ENCODE measurements at regions of chr9 and their contacts with region 1.

Region 1: GRCh38 chr9:95510709-95511615 is 5.8 kb downstream of the PTCH1 start:
- DNase-seq: peak; percentile 97
- ATAC-seq: peak; percentile 77
- H3K4me3 ChIP-seq: peak overlapping the region; percentile 84
- H3K27ac ChIP-seq: peak overlapping the region; percentile 99
- H3K4me1 ChIP-seq: peaks cover 4% of the 10 kb centered on the region
- H3K27me3 ChIP-seq: no peaks in the 10 kb centered on the region; the same call in 1 of the 2 replicates
- CTCF ChIP-seq: no peak
- POLR2A ChIP-seq: peak; percentile 28; the same call in 1 of the 2 replicates
- RAD21 ChIP-seq: no peak

Region 2: DNA sequence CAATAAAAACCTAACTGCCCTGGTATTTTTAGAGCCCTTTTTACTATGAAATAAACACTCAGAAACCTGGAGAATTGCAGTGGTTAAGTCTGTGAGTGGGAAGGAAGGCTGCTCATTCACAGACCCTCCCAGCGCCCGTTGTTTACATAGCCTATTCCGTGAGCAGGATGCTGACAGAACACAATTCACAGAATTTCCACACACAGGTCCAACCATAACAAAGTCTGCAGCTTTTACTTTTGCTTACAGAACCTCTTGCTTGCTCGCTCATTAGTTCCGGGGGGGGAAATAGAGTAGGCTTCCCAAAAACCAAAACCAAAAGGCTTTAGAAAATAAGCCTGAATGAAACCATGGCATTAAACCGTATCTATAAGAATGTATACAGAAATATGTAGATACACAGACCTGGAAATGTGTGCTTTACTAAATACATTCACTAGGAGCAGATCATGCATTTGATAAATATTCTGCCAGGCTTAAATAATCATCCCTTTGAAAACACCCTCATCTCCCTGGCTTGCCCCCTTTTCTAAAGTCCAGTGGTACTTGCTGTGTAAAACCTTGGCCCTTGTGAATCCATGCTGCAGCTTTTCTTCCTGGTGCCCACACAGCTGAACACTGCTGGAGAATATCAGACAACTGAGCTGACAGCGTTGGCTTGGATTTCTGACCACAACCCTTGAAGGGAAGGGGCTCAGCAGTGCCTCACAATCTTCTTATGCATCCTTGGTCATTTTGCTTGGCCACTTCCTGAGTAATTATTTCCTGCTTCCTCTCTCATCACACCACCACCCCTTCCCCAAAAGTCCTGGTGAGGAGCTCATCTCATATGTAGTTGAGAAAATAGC is 321.5 kb before region 1 on chr9:
- CTCF ChIA-PET with region 1: no interaction called
- POLR2A ChIA-PET with region 1: no interaction called
- dilution Hi-C with region 1: no loop called
- in situ Hi-C with region 1: no loop called
- intact Hi-C with region 1: loop called (anchors 5 kb)
- DNase-seq: peak; percentile 91
- ATAC-seq: peak; percentile 96
- H3K4me3 ChIP-seq: peak overlapping the region; percentile 1; the same call in 1 of the 2 replicates
- H3K27ac ChIP-seq: peak overlapping the region; percentile 51; the same call in 1 of the 2 replicates
- H3K4me1 ChIP-seq: peaks cover 12% of the 10 kb centered on the region
- H3K27me3 ChIP-seq: no peaks in the 10 kb centered on the region
- CTCF ChIP-seq: no peak
- POLR2A ChIP-seq: no peak
- RAD21 ChIP-seq: no peak

Region 3: GRCh38 chr9:95317119-95317892 is 193.7 kb before region 1 on chr9 and contains the start of gene FANCC:
- CTCF ChIA-PET with region 1: no interaction called
- POLR2A ChIA-PET with region 1: interaction called, 8 read pairs
- dilution Hi-C with region 1: no loop called
- in situ Hi-C with region 1: loop called (anchors 10 kb)
- intact Hi-C with region 1: loop called (anchors 2 kb)
- DNase-seq: peak; percentile 86
- ATAC-seq: peak; percentile 92
- H3K4me3 ChIP-seq: peak within 1 kb of the TSS; percentile 99
- H3K27ac ChIP-seq: peak within 1 kb of the TSS; percentile 100
- H3K4me1 ChIP-seq: peaks cover 2% of the 10 kb centered on the region; the same call in 1 of the 2 replicates
- H3K27me3 ChIP-seq: no peaks in the 10 kb centered on the region
- CTCF ChIP-seq: no peak
- POLR2A ChIP-seq: peak; percentile 86
- RAD21 ChIP-seq: no peak
- total RNA-seq, gene FANCC: 6.3 and 6.4 TPM in 2 replicates

Region 4: DNA sequence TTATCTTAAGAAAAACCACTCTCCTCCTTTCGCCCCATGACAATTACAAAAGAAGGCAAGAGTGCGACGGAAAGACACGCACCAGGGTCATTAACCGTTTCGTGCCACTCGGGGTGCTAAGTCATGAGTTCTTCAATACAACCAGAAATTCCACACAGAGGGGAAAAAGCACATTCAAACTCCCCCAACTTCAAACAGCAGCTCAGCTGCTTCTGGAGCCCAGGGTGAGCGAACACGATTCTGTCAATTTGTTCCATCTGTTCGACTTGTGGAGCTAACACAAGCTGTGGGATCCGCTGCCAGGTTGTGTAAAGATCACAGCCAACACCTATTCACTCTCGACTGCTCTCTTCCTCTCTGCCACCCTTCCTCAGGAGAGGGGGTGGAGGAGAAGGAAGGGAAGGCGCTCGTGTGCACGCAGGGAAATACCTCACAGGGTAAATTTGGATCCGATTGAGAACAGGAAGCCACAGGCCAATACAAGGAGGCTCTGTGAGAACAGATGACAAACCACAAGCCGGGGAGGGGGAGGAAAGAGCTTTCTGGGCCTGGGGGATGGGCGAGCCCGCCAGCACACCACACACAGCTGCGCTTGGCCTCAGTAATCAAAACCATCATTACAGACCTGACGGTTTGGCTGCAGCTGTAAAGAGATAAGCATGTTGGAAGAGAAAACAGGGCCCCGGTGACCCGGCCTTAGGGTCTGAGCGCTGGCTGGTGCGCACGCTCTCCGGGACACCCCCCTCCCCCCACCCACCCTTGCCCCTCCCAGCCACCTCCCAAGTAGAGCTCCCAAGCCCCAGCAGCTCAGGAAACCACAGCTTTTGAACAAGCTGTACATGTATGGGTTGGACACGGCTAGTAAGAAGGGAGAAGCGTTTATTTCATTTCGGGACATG is 48.5 kb before region 1 on chr9:
- CTCF ChIA-PET with region 1: no interaction called
- POLR2A ChIA-PET with region 1: no interaction called
- dilution Hi-C with region 1: no loop called
- in situ Hi-C with region 1: no loop called
- intact Hi-C with region 1: loop called (anchors 2 kb)
- DNase-seq: peak; percentile 94
- ATAC-seq: peak; percentile 84
- H3K4me3 ChIP-seq: peak overlapping the region; percentile 5; the same call in 1 of the 2 replicates
- H3K27ac ChIP-seq: peak overlapping the region; percentile 89
- H3K4me1 ChIP-seq: peaks cover 44% of the 10 kb centered on the region
- H3K27me3 ChIP-seq: no peaks in the 10 kb centered on the region
- CTCF ChIP-seq: no peak
- POLR2A ChIP-seq: no peak
- RAD21 ChIP-seq: no peak; the same call in 1 of the 2 replicates

Region 5: GRCh38 chr9:95495961-95496360 is 15.0 kb before region 1 on chr9:
- CTCF ChIA-PET with region 1: no interaction called
- POLR2A ChIA-PET with region 1: no interaction called
- dilution Hi-C with region 1: no loop called
- in situ Hi-C with region 1: no loop called
- intact Hi-C with region 1: no loop called
- DNase-seq: no peak
- ATAC-seq: no peak
- H3K4me3 ChIP-seq: no peak overlapping the region
- H3K27ac ChIP-seq: no peak overlapping the region
- H3K4me1 ChIP-seq: peaks cover 24% of the 10 kb centered on the region
- H3K27me3 ChIP-seq: no peaks in the 10 kb centered on the region
- CTCF ChIP-seq: no peak
- POLR2A ChIP-seq: no peak
- RAD21 ChIP-seq: no peak

Region 6: GRCh38 chr9:95875305-95876137 is 364.6 kb after region 1 on chr9 and contains the start of gene ERCC6L2:
- CTCF ChIA-PET with region 1: no interaction called
- POLR2A ChIA-PET with region 1: no interaction called
- dilution Hi-C with region 1: no loop called
- in situ Hi-C with region 1: loop called (anchors 10 kb)
- intact Hi-C with region 1: loop called (anchors 2 kb)
- DNase-seq: peak; percentile 99
- ATAC-seq: peak; percentile 88
- H3K4me3 ChIP-seq: no peak within 1 kb of the TSS
- H3K27ac ChIP-seq: peak within 1 kb of the TSS; percentile 87
- H3K4me1 ChIP-seq: peaks cover 2% of the 10 kb centered on the region
- H3K27me3 ChIP-seq: no peaks in the 10 kb centered on the region
- CTCF ChIP-seq: no peak
- POLR2A ChIP-seq: peak; percentile 96
- RAD21 ChIP-seq: peak; percentile 2; the same call in 1 of the 2 replicates
- total RNA-seq, gene ERCC6L2: 67.6 and 83.3 TPM in 2 replicates

Region 7: DNA sequence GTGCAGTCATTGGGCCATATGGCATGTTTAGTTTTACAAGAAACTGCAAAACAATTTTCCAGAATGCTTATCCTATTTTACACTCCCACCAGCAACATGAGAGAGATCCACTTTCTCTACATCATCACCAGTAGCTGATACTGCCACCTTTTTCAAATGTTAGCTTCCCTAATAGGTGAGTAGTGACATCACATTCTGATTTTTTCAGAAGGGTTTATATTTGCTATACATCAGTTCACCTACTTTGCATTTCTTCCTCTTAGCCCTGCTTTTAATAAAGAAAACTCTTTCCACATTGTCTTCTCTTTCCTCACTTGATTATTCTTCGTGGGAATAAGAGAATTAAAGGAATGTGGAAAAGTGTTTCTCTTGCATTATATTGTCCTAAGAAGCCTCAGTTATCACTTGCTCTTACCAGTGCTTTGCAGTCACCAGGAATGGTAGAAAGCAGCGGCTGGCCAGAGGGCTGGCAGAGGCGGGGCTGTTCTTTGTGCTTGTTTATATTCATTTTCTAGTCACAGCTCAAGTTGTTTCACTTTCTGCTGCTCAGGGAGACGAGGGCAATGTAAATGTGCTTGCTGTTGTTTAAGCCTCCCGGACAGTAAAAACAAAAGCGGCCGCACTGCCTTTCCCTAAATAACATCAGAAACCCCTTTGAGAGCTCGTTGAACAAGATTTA is 626.2 kb after region 1 on chr9:
- CTCF ChIA-PET with region 1: no interaction called
- POLR2A ChIA-PET with region 1: no interaction called
- dilution Hi-C with region 1: no loop called
- in situ Hi-C with region 1: no loop called
- intact Hi-C with region 1: loop called (anchors 10 kb)
- DNase-seq: peak; percentile 78
- ATAC-seq: peak; percentile 83
- H3K4me3 ChIP-seq: peak overlapping the region; percentile 35
- H3K27ac ChIP-seq: peak overlapping the region; percentile 89; the same call in 1 of the 2 replicates
- H3K4me1 ChIP-seq: peaks cover 29% of the 10 kb centered on the region
- H3K27me3 ChIP-seq: peaks cover 28% of the 10 kb centered on the region
- CTCF ChIP-seq: no peak
- POLR2A ChIP-seq: no peak
- RAD21 ChIP-seq: no peak

Measured in IMR-90 (cell line).